ENCODE measurements at regions of chr13 and their contacts with region 1.

Region 1: GRCh38 chr13:95387733-95388207 is 86.5 kb upstream of the ABCC4 start:
- DNase-seq: peak; percentile 49
- H3K4me3 ChIP-seq: no peak overlapping the region
- H3K27ac ChIP-seq: no peak overlapping the region
- H3K4me1 ChIP-seq: peaks cover 10% of the 10 kb centered on the region
- H3K27me3 ChIP-seq: peaks cover 8% of the 10 kb centered on the region
- CTCF ChIP-seq: no peak

Region 2: GRCh38 chr13:95296326-95296925 is 91.3 kb before region 1 on chr13:
- intact Hi-C with region 1: loop called (anchors 10 kb)
- DNase-seq: peak; percentile 42
- H3K4me3 ChIP-seq: no peak overlapping the region
- H3K27ac ChIP-seq: peak overlapping the region; percentile 48
- H3K4me1 ChIP-seq: peaks cover 47% of the 10 kb centered on the region
- H3K27me3 ChIP-seq: no peaks in the 10 kb centered on the region
- CTCF ChIP-seq: peak; percentile 72